Sciatic nerve (tissue), 2 donors: ENCODE measurements at regions of chr13 and their contacts with region 1.

Region 1: GRCh38 chr13:94435604-94436226 is 43.8 kb downstream of the DCT start:
- DNase-seq: no peak
- ATAC-seq: peak; percentile 88

Region 2: GRCh38 chr13:94351292-94351990 is 84.3 kb before region 1 on chr13:
- intact Hi-C with region 1: no loop called
- DNase-seq: no peak
- ATAC-seq: no peak

Region 3: DNA sequence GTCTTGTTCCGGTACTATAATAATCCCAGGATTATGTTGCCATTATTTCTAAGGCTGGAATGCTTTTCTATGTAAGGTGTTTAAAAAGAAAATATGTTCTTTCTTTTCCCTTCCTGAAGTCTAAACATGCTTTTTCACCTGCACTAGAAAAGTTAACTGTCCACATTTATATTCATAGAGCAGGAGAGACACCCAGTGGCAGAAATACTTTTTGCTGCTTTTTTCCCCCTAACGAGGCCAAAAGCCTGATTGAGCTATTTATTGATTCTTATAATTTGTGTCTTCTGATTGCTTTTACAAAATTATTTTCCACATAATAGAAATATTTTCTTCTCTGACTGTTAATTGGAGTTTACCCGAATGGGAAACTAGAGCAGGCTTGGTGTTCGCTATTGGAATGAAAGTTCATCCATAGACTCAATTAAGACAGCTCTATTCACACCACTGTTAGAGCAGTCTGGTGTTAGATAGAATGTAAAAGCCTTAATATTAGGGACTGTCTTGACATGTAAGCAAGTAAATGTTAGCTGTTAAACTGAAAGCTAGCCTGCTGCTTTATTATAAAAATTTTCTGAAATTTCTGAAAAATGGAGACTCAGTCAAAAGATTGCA is 181.8 kb after region 1 on chr13:
- intact Hi-C with region 1: loop called (anchors 10 kb)
- DNase-seq: no peak
- ATAC-seq: peak; percentile 70

Region 4: GRCh38 chr13:94660695-94661326 is 225.1 kb after region 1 on chr13:
- intact Hi-C with region 1: no loop called
- DNase-seq: no peak
- ATAC-seq: no peak